Sciatic nerve (tissue), 2 donors: ENCODE measurements at regions of chr6 and their contacts with region 1.

Region 1: GRCh38 chr6:63097222-63097621 is 114.0 kb upstream of the FKBP1C start:
- DNase-seq: no peak
- ATAC-seq: no peak

Region 2: DNA sequence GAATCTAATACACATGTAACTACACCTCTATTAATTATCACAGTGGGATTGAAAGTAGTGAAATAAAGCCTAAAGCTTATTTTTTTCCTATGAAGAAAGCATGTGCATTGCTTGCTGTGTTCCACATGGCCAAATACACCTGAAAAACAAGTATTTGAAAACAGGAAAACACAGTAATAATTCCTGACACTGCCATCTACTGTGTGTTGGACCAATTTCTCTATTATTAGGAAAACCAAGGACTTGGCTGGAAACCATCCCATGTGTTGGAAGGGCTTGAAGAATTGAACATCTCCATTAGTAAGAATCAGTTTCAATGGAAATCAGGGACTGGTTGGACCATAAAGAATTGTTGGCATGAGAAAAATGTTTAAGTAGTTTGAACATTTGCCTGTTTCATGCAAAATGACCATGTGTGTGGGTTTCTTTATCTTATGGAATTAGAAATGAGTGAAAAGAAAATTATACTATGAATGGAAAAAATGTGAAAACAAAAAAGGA is 662.4 kb after region 1 on chr6:
- intact Hi-C with region 1: loop called (anchors 10 kb)
- DNase-seq: no peak
- ATAC-seq: no peak